AG04450 (cell line): ENCODE measurements at regions of chr3 and their contacts with region 1.

Region 1: GRCh38 chr3:137013955-137014688 is 56.3 kb downstream of the IL20RB start:
- DNase-seq: peak; percentile 74
- H3K4me3 ChIP-seq: peak overlapping the region; percentile 56
- H3K27ac ChIP-seq: no peak overlapping the region
- H3K27me3 ChIP-seq: no peaks in the 10 kb centered on the region
- CTCF ChIP-seq: peak; percentile 79

Region 2: DNA sequence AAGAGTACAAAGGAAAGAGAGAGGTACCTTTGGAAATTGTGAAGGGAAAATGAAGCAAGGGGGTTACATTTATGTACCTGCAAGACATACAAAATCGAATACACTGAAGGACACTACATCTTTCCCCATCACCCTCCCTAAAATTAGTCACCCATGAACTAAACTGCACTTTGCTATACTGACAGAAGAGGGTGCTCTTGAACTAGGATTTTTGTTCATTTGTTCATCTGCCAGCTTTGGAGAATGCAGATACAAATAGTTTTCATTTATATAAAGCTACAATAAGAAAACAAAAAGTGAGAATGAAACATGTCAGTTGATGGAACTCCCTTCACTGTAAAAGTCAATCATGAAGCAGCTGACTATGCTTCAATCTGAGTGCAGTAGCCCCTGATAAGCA is 708.2 kb before region 1 on chr3:
- CTCF ChIA-PET with region 1: interaction called, 56 read pairs
- POLR2A ChIA-PET with region 1: interaction called, 5 read pairs
- DNase-seq: peak; percentile 43
- H3K4me3 ChIP-seq: no peak overlapping the region
- H3K27ac ChIP-seq: no peak overlapping the region
- H3K27me3 ChIP-seq: no peaks in the 10 kb centered on the region
- CTCF ChIP-seq: peak; percentile 72

Region 3: GRCh38 chr3:136728918-136729317 is 285.2 kb before region 1 on chr3:
- CTCF ChIA-PET with region 1: interaction called, 11 read pairs
- POLR2A ChIA-PET with region 1: no interaction called
- DNase-seq: no peak
- H3K4me3 ChIP-seq: no peak overlapping the region; the same call in 1 of the 2 replicates
- H3K27ac ChIP-seq: no peak overlapping the region
- H3K27me3 ChIP-seq: no peaks in the 10 kb centered on the region
- CTCF ChIP-seq: no peak

Region 4: GRCh38 chr3:136838641-136839555 is 175.2 kb before region 1 on chr3:
- CTCF ChIA-PET with region 1: interaction called, 14 read pairs
- POLR2A ChIA-PET with region 1: no interaction called
- DNase-seq: no peak
- H3K4me3 ChIP-seq: no peak overlapping the region
- H3K27ac ChIP-seq: no peak overlapping the region
- H3K27me3 ChIP-seq: no peaks in the 10 kb centered on the region
- CTCF ChIP-seq: no peak

Region 5: GRCh38 chr3:136949708-136950107 is 64.4 kb before region 1 on chr3:
- CTCF ChIA-PET with region 1: interaction called, 21 read pairs
- POLR2A ChIA-PET with region 1: no interaction called
- DNase-seq: no peak
- H3K4me3 ChIP-seq: no peak overlapping the region
- H3K27ac ChIP-seq: no peak overlapping the region
- H3K27me3 ChIP-seq: no peaks in the 10 kb centered on the region
- CTCF ChIP-seq: peak; percentile 32

Region 6: DNA sequence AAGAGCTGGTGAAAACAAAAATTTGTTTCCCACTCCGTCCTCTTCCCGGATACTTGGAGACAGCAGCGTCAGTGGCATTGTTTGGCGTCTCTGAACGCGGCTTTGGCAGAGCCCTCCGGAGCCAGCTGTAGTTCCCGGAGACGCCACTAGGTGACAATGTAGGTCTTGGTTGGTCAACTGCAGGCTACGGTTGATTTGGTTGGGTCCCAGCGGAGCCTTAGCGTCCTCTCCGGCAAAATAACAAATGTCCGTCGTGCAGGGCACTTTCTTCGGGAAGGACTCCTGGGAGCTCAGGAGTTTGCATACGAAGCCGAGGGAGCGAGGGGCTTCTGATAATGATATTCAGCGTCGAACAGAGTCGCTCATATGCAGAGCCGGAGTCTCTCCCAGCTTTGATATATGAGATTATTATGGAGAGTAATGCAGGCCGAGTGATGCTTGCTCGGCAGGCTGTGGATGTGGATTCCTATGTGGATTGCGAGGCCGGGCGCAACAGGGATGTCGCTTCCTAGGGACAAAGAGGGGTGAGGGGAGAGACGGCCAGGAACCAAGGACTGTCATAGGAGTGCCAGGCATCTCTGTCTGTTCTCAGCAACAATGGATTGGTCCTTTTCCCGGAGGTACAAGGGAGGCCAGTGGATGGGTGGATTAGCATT is 18.5 kb after region 1 on chr3:
- CTCF ChIA-PET with region 1: interaction called, 23 read pairs
- POLR2A ChIA-PET with region 1: no interaction called
- DNase-seq: peak; percentile 32
- H3K4me3 ChIP-seq: peak overlapping the region; percentile 58
- H3K27ac ChIP-seq: no peak overlapping the region
- H3K27me3 ChIP-seq: peaks cover 8% of the 10 kb centered on the region
- CTCF ChIP-seq: peak; percentile 95